Naive thymus-derived CD4-positive, alpha-beta T cell (primary cell): ENCODE measurements at regions of chr3 and their contacts with region 1.

Region 1: GRCh38 chr3:143450632-143451031 is 331.1 kb downstream of the CHST2 start:
- DNase-seq: no peak
- ATAC-seq: no peak
- H3K4me3 ChIP-seq: no peak overlapping the region
- H3K4me3 Mint-ChIP-seq: no peak overlapping the region
- H3K27ac ChIP-seq: no peak overlapping the region
- H3K27ac Mint-ChIP-seq: no peak overlapping the region
- H3K4me1 ChIP-seq: no peaks in the 10 kb centered on the region
- H3K4me1 Mint-ChIP-seq: peaks cover 0 to 2% (median 0%) of the 10 kb centered on the region in 7 donors
- H3K27me3 ChIP-seq: no peaks in the 10 kb centered on the region
- H3K27me3 Mint-ChIP-seq: no peaks in the 10 kb centered on the region

Region 2: GRCh38 chr3:143040261-143040879 is 410.3 kb before region 1 on chr3:
- CTCF ChIA-PET with region 1: no interaction called
- POLR2A ChIA-PET with region 1: no interaction called
- intact Hi-C with region 1: loop called in 1 of 2 experiments (anchors 10 kb)
- DNase-seq: peak in 1 of 9 donors; percentile 13
- ATAC-seq: no peak
- H3K4me3 ChIP-seq: no peak overlapping the region
- H3K4me3 Mint-ChIP-seq: no peak overlapping the region
- H3K27ac ChIP-seq: no peak overlapping the region
- H3K27ac Mint-ChIP-seq: no peak overlapping the region
- H3K4me1 ChIP-seq: no peaks in the 10 kb centered on the region
- H3K4me1 Mint-ChIP-seq: peaks cover 0 to 16% (median 5%) of the 10 kb centered on the region in 7 donors
- H3K27me3 ChIP-seq: no peaks in the 10 kb centered on the region
- H3K27me3 Mint-ChIP-seq: no peaks in the 10 kb centered on the region

Region 3: DNA sequence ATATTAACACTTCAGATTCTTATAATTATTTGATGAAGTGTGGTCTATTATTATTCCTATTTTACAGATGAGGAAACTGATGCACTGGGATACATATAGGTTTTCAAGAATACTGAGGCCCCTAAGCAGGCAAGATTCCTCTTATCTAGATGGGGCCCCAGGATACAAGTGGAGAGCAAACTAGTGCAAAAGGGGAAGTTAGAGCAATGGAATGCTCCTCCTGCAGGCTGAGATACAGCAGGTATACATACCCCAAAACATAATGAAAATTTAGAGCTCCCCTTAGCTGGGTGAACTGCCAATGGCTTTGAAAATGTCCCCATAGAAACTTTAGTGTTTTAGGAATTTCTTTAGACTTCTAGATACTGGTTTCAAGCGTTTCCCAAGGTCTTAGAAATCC is 84.0 kb before region 1 on chr3:
- CTCF ChIA-PET with region 1: no interaction called
- POLR2A ChIA-PET with region 1: no interaction called
- intact Hi-C with region 1: no loop called
- DNase-seq: no peak
- ATAC-seq: no peak
- H3K4me3 ChIP-seq: no peak overlapping the region
- H3K4me3 Mint-ChIP-seq: no peak overlapping the region
- H3K27ac ChIP-seq: no peak overlapping the region
- H3K27ac Mint-ChIP-seq: peak overlapping the region in 1 of 9 donors; percentile 17
- H3K4me1 ChIP-seq: peaks cover 0 to 15% of the 10 kb centered on the region in 2 donors
- H3K4me1 Mint-ChIP-seq: peaks cover 17 to 34% (median 31%) of the 10 kb centered on the region in 7 donors
- H3K27me3 ChIP-seq: no peaks in the 10 kb centered on the region
- H3K27me3 Mint-ChIP-seq: no peaks in the 10 kb centered on the region

Region 4: GRCh38 chr3:143429628-143430514 is 20.8 kb before region 1 on chr3:
- CTCF ChIA-PET with region 1: no interaction called
- POLR2A ChIA-PET with region 1: no interaction called
- intact Hi-C with region 1: no loop called
- DNase-seq: no peak
- ATAC-seq: no peak
- H3K4me3 ChIP-seq: no peak overlapping the region
- H3K4me3 Mint-ChIP-seq: no peak overlapping the region
- H3K27ac ChIP-seq: no peak overlapping the region
- H3K27ac Mint-ChIP-seq: peak overlapping the region in 1 of 9 donors; percentile 37
- H3K4me1 ChIP-seq: no peaks in the 10 kb centered on the region
- H3K4me1 Mint-ChIP-seq: peaks cover 0 to 11% (median 5%) of the 10 kb centered on the region in 7 donors
- H3K27me3 ChIP-seq: no peaks in the 10 kb centered on the region
- H3K27me3 Mint-ChIP-seq: no peaks in the 10 kb centered on the region